Activated B cell treated with CpG ODN at 0.5 μM for 24 hours (primary cell): ENCODE measurements at regions of chr17 and their contacts with region 1.

Region 1: DNA sequence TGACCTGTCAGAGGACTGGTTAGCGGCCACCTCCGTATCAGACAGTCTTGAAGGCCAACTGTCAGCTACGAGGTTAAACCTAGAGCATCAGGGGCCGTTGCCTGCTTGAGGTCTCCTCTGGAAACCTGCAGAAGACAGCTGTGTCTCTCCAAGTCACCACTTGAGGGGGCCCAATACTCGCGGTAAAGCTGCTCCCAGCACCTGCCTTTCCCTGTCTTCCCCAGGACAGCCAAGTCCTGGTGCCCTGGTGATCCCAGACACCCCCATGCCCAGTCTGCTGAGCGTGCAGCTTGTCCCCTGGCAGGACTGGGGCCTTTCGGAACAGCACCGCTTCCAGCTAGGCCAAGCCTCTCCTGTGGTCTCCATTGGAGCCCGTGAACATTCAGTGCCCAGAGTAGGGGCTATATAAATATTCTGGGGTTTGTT is 80.1 kb downstream of the DNAH17 start:
- DNase-seq: peak; percentile 26
- ATAC-seq: peak; percentile 77
- H3K4me3 Mint-ChIP-seq: no peak overlapping the region
- H3K27ac Mint-ChIP-seq: no peak overlapping the region
- H3K4me1 Mint-ChIP-seq: no peaks in the 10 kb centered on the region
- H3K27me3 Mint-ChIP-seq: no peaks in the 10 kb centered on the region
- CTCF ChIP-seq: peak; percentile 19

Region 2: DNA sequence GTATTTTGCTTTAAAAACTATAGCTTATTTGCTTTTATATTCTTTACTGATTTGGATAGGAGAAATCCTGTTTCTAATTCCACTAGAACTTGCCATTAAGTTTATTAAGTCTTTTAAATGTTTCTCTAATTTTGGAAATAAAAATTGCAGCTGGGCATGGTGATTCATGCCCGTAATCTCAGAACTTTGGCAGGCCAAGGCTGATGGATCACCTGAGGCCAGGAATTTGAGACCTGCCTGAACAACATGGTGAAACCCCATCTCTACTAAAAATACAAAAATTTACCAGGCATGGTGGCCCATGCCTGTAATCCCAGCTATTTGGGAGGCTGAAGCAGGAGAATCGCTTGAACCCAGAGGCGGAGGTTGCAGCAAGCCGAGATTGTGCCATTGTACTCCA is 49.3 kb after region 1 on chr17:
- CTCF ChIA-PET with region 1: no interaction called
- POLR2A ChIA-PET with region 1: no interaction called
- intact Hi-C with region 1: no loop called
- DNase-seq: no peak
- ATAC-seq: no peak
- H3K4me3 Mint-ChIP-seq: no peak overlapping the region
- H3K27ac Mint-ChIP-seq: no peak overlapping the region
- H3K4me1 Mint-ChIP-seq: no peaks in the 10 kb centered on the region
- H3K27me3 Mint-ChIP-seq: peaks cover 5% of the 10 kb centered on the region
- CTCF ChIP-seq: no peak

Region 3: DNA sequence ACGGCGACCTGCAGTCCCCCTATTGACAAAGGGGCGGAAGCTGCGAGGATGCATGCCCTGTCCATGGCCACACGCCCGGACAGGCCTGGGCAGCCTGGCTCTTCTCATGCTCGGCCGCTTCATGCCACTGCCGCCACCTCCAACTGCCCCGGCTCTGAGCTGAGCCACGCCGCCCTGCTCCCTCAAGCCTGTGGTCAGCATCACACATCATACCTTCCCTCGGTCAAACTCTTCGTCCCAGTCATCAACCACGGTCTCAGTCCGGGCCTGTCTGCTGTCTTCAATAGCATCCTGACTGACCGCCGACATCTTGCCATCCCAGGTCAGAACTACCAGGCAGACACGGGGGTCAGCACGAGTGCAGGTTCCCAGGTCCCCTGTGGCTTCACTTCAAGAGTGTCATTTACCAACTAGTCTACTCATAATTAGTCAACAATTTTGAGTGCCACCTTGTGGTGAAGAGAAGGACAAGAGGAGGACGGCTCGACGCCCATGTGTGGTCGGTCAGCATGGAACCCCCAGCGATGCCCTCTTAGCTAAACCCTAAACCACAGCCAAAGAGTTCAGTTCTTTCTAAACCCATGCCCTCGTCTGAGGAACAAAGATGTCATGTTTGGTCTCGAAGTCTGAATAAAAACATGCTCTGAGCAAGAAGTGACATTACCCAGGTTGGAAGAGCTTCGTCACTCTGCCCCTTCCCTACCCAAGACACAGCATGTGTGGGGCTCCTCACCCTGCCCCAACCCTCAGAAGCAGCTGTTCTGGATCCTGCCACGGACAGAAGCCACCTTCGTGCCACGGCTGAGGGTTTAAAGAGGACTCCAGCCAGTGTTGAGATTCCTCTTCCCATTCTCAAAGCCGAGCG is 301.8 kb after region 1 on chr17:
- CTCF ChIA-PET with region 1: interaction called, 12 read pairs
- POLR2A ChIA-PET with region 1: interaction called, 11 read pairs
- intact Hi-C with region 1: no loop called
- DNase-seq: no peak
- ATAC-seq: peak; percentile 61
- H3K4me3 Mint-ChIP-seq: no peak overlapping the region
- H3K27ac Mint-ChIP-seq: peak overlapping the region; percentile 50
- H3K4me1 Mint-ChIP-seq: peaks cover 10% of the 10 kb centered on the region
- H3K27me3 Mint-ChIP-seq: no peaks in the 10 kb centered on the region
- CTCF ChIP-seq: no peak